Uterus (tissue), 4 donors: ENCODE measurements at regions of chr15 and their contacts with region 1.

Region 1: GRCh38 chr15:73697033-73697467 is 12.9 kb downstream of the CD276 start:
- DNase-seq: peak; percentile 82 to 84
- H3K4me3 ChIP-seq: no peak overlapping the region
- H3K27ac ChIP-seq: peak overlapping the region in 1 of 2 donors; percentile 8
- H3K4me1 ChIP-seq: peaks cover 0 to 10% of the 10 kb centered on the region in 2 donors
- H3K27me3 ChIP-seq: no peaks in the 10 kb centered on the region
- CTCF ChIP-seq: no peak
- POLR2A ChIP-seq: no peak

Region 2: GRCh38 chr15:73550190-73550589 is 146.9 kb before region 1 on chr15:
- intact Hi-C with region 1: no loop called
- DNase-seq: no peak
- H3K4me3 ChIP-seq: no peak overlapping the region
- H3K27ac ChIP-seq: no peak overlapping the region
- H3K4me1 ChIP-seq: no peaks in the 10 kb centered on the region
- H3K27me3 ChIP-seq: no peaks in the 10 kb centered on the region
- CTCF ChIP-seq: no peak
- POLR2A ChIP-seq: no peak

Region 3: DNA sequence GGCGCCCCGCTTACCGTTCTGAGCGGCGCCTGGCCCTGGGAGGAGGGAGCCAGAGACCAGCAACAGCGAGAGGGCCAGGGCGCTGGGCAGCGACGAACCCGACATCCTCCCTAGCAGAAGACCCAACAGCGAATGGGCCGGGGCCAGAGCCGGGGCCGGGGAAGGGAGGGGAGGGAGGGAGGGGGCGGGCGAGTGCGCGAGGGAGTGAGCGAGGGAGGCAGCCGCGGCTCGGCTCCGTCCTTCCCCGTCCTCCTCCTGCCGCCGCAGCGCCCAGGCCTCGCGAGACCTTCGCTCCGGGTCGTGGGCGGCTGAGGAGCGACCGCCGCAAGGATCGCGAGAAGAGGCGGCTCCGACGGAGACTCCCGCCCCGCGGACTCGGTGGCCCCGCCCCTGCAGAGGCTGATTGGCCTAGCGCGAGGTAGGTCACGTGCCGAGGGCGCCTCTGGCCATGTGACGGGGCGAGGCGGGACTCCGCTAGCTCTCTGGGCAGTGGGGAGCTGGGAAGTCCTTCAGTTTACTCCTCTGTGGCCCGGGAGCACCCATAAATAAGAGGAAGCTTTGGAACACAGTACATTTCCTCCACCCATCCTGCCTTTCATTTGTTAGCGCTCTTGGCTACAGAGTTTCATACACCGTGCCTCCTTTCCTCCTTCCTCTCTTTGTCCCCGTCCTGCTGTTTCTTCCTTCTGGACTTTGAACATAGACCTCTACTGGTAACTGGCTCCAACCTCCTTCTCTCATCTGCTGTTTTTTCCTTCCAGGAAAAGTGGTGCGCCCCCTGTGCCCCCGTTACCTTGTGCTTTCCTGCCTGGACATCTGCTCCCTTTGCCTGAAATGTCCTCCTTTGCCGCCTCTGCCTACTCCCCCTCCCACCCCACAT is 63.7 kb before region 1 on chr15 and contains the start of gene NPTN:
- intact Hi-C with region 1: loop called (anchors 10 kb)
- DNase-seq: peak; percentile 98 to 99
- H3K4me3 ChIP-seq: peak within 1 kb of the TSS; percentile 64 to 90
- H3K27ac ChIP-seq: peak within 1 kb of the TSS; percentile 91 to 98
- H3K4me1 ChIP-seq: peaks cover 0 to 20% of the 10 kb centered on the region in 2 donors
- H3K27me3 ChIP-seq: no peaks in the 10 kb centered on the region
- CTCF ChIP-seq: peak in 1 of 4 experiments; percentile 8
- POLR2A ChIP-seq: peak; percentile 78 to 83
- total RNA-seq, gene NPTN: 159 to 356 (median 215) TPM

Region 4: DNA sequence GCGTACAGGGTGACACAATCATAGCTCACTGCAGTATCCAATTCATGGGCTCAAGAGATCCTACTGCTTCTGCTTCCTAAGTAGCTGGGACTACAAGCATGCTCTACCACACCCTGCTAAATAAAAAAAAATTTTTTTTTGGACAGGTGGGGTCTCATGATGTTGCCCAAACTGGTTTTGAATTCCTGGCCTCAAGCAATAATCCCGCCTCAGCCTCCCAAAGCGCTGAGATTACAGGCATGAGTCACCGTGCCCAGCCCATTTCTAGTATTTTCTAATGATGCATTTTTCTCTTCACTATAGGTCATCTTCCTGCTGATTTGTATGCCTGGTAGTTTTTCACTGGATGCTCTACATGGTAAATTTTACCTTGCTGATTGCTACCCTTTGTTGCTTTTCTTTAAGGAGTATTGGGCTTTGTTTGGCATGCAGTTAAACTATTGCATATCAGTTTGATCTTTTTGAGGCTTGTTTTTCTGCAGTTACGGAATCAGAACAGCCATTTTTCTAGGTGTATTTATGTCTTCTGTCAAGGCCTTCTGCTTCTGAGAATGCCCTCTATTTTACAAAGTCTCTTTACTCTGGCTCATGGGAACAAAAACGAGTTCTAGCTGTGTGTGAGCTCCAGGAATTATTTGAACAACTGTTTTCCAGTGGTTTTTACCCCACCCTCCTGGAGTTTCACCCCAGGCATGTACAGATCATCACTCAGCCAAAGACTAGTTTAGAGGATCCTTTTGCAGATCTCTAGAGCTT is 49.6 kb before region 1 on chr15:
- intact Hi-C with region 1: no loop called
- DNase-seq: no peak
- H3K4me3 ChIP-seq: no peak overlapping the region
- H3K27ac ChIP-seq: no peak overlapping the region
- H3K4me1 ChIP-seq: no peaks in the 10 kb centered on the region
- H3K27me3 ChIP-seq: no peaks in the 10 kb centered on the region
- CTCF ChIP-seq: no peak
- POLR2A ChIP-seq: no peak

Region 5: GRCh38 chr15:73873889-73874511 is 176.9 kb after region 1 on chr15:
- intact Hi-C with region 1: no loop called
- DNase-seq: no peak
- H3K4me3 ChIP-seq: no peak overlapping the region
- H3K27ac ChIP-seq: no peak overlapping the region
- H3K4me1 ChIP-seq: no peaks in the 10 kb centered on the region
- H3K27me3 ChIP-seq: no peaks in the 10 kb centered on the region
- CTCF ChIP-seq: peak; percentile 23 to 55 (median 41)
- POLR2A ChIP-seq: no peak